Activated CD4-positive, alpha-beta memory T cell treated with anti-CD3 and anti-CD28 coated beads, Interleukin-2, amount 10 ng/mL, durations not matched to agents 7 days and 5 days (primary cell): ENCODE measurements at regions of chr9 and their contacts with region 1.

Region 1: DNA sequence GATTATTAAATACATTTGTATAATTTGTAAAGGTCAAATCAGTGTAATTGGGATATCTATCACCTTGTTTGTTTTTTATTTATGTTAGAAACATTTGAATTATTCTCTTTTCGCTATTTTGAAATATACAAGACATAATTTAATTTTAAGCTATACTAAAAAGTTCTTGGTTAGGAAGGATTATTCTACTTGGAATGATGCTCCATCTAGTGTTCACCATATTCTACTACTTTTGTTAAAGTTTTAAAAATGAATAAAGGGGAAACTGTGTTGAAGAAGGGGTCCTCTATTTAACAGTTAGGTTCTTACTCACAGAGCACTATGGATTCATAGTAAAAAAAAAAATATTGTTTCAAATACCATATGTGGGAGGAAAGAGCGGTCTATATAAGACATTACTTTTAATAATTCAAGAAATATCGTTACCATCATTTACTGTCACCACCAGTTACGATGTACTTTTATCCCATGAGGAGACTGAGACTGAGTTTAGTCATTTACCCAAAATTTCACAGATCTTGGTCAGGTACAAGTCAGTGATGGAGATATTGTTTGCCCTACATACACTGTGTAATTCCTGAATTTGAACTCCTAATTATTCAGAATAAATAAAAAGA is 6.3 kb upstream of the STOM start:
- DNase-seq: no peak
- H3K4me3 Mint-ChIP-seq: no peak overlapping the region
- H3K27ac Mint-ChIP-seq: no peak overlapping the region
- H3K4me1 Mint-ChIP-seq: peaks cover 19% of the 10 kb centered on the region
- H3K27me3 Mint-ChIP-seq: peaks cover 7% of the 10 kb centered on the region

Region 2: GRCh38 chr9:121133149-121133816 is 243.0 kb before region 1 on chr9:
- CTCF ChIA-PET with region 1: no interaction called
- POLR2A ChIA-PET with region 1: no interaction called
- DNase-seq: peak; percentile 90
- H3K4me3 Mint-ChIP-seq: peak overlapping the region; percentile 33
- H3K27ac Mint-ChIP-seq: peak overlapping the region; percentile 87
- H3K4me1 Mint-ChIP-seq: peaks cover 64% of the 10 kb centered on the region
- H3K27me3 Mint-ChIP-seq: no peaks in the 10 kb centered on the region

Region 3: DNA sequence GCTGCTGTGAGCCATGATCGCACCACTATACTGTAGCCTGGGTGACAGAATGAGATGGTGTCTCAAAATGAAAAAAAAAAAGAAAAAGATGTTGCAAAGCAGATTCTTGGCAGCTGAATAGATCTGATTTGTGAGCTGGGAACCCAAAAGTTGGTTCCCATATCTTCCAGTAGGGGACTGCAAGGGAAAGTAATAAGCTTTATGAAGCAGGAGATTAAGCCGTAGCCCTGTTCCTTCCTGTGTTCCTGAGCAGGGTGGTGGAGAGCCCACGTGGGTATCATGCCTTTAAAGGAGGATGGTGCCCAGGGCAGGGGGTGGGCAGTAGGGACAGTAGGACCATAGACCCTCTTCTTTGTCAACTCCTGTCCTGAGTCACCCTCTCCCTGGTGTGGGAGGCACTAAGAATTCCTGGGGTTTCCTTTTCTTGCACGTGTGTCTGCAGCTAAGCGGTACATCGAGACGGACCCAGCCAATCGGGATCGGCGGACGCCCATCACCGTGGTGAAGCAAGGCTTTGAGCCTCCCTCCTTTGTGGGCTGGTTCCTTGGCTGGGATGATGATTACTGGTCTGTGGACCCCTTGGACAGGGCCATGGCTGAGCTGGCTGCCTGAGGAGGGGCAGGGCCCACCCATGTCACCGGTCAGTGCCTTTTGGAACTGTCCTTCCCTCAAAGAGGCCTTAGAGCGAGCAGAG is 44.2 kb before region 1 on chr9:
- CTCF ChIA-PET with region 1: no interaction called
- POLR2A ChIA-PET with region 1: no interaction called
- DNase-seq: no peak
- H3K4me3 Mint-ChIP-seq: no peak overlapping the region
- H3K27ac Mint-ChIP-seq: no peak overlapping the region
- H3K4me1 Mint-ChIP-seq: no peaks in the 10 kb centered on the region
- H3K27me3 Mint-ChIP-seq: no peaks in the 10 kb centered on the region

Region 4: GRCh38 chr9:121399883-121400607 is 23.7 kb after region 1 on chr9:
- CTCF ChIA-PET with region 1: interaction called, 18 read pairs
- POLR2A ChIA-PET with region 1: no interaction called
- DNase-seq: no peak
- H3K4me3 Mint-ChIP-seq: no peak overlapping the region
- H3K27ac Mint-ChIP-seq: no peak overlapping the region
- H3K4me1 Mint-ChIP-seq: peaks cover 5% of the 10 kb centered on the region
- H3K27me3 Mint-ChIP-seq: peaks cover 16% of the 10 kb centered on the region